ENCODE measurements at regions of chr14 and their contacts with region 1.

Region 1: DNA sequence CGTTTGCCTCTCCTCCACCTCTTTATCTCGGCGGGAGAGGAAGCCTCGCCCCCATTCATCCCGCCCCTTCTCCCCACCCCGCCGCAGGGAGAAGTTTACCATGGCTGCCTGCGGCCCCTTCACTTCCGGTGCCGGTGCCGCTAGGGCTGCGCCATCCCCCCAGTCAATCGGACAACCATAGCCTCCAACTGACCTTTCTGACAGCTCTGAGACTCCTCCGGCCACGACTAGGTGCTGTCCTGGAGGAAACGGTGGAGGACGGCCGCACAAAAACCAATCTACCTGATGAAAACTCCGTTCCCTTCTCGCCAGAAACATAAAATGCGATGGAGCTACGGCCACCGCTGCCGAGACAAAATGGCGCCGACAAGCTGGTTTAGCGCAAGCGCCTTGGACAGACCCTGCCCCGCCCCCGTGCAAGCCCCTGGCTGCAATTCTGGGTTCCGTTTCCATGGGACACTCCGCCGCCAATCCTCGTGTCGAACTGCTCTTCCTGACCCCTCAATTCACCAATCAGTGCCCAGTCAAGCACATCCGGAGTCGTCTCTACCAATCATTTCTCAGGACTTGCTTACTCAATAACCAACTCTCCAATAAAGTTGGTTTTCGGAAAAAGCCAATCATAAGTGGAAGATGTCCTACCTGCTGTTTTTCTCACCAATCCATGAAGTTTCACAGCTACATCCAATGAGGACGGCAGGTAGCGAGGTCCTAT is 436 bp upstream of the ARID4A start:
- DNase-seq: peak; percentile 98
- ATAC-seq: peak; percentile 92
- H3K4me3 Mint-ChIP-seq: no peak overlapping the region
- H3K27ac Mint-ChIP-seq: no peak overlapping the region
- H3K4me1 Mint-ChIP-seq: peaks cover 11% of the 10 kb centered on the region
- H3K27me3 Mint-ChIP-seq: no peaks in the 10 kb centered on the region
- CTCF ChIP-seq: no peak

Region 2: GRCh38 chr14:58244556-58245387 is 53.1 kb before region 1 on chr14 and contains the start of gene PSMA3:
- CTCF ChIA-PET with region 1: interaction called, 8 read pairs
- POLR2A ChIA-PET with region 1: interaction called, 21 read pairs
- DNase-seq: peak; percentile 97
- ATAC-seq: peak; percentile 94
- H3K4me3 Mint-ChIP-seq: peak within 1 kb of the TSS; percentile 92
- H3K27ac Mint-ChIP-seq: peak within 1 kb of the TSS; percentile 98
- H3K4me1 Mint-ChIP-seq: peaks cover 23% of the 10 kb centered on the region
- H3K27me3 Mint-ChIP-seq: no peaks in the 10 kb centered on the region
- CTCF ChIP-seq: no peak
- total RNA-seq, gene PSMA3: 260 to 286 TPM (median 270 TPM) in 3 replicates

Region 3: DNA sequence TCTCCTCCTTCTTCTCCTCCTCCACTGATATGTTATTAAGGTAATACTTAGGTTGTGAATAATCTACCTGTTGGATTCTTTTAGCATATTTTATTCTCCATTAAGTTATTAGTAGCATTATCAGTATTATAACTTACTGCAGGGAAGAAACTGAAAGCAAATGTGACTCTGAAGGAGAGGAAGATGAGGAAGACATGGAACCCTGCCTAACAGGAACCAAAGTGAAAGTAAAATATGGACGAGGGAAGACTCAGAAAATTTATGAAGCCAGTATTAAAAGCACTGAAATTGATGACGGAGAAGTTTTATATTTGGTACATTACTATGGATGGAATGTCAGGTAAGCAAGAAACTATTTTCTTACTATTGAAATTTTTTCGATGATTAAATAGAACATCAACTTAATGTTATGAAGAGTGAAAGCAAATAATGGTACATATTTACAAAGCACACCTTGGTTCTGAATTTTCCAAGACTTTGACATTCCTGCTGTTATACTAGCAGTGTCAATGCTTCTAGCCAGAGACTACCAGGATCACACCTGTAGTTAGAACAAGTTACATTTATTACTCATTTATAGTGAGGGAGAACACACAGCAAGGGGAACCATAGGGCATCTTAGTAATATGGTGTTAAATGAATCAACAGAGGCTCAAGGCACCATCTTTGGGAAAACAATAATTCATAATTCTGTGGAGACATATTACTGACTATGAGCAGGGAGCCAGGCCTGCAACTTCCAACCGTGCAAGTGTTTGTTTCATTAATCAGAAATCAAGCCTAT is 55.8 kb after region 1 on chr14:
- CTCF ChIA-PET with region 1: no interaction called
- POLR2A ChIA-PET with region 1: no interaction called
- DNase-seq: no peak
- ATAC-seq: no peak
- H3K4me3 Mint-ChIP-seq: no peak overlapping the region
- H3K27ac Mint-ChIP-seq: no peak overlapping the region
- H3K4me1 Mint-ChIP-seq: no peaks in the 10 kb centered on the region
- H3K27me3 Mint-ChIP-seq: no peaks in the 10 kb centered on the region
- CTCF ChIP-seq: no peak

Region 4: GRCh38 chr14:58395812-58396788 is 98.2 kb after region 1 on chr14 and contains the start of gene TOMM20L:
- CTCF ChIA-PET with region 1: interaction called, 12 read pairs
- POLR2A ChIA-PET with region 1: interaction called, 9 read pairs
- DNase-seq: peak; percentile 82
- ATAC-seq: peak; percentile 88
- H3K4me3 Mint-ChIP-seq: peak within 1 kb of the TSS; percentile 68
- H3K27ac Mint-ChIP-seq: peak within 1 kb of the TSS; percentile 81
- H3K4me1 Mint-ChIP-seq: peaks cover 31% of the 10 kb centered on the region
- H3K27me3 Mint-ChIP-seq: peaks cover 31% of the 10 kb centered on the region
- CTCF ChIP-seq: peak; percentile 91
- total RNA-seq, gene TOMM20L: not detected in 3 replicates

Region 5: GRCh38 chr14:58427281-58428117 is 129.6 kb after region 1 on chr14 and contains the starts of genes KIAA0586 and TIMM9:
- CTCF ChIA-PET with region 1: no interaction called
- POLR2A ChIA-PET with region 1: interaction called, 14 read pairs
- DNase-seq: peak; percentile 95
- ATAC-seq: peak; percentile 89
- H3K4me3 Mint-ChIP-seq: peak within 1 kb of the TSS; percentile 93
- H3K27ac Mint-ChIP-seq: peak within 1 kb of the TSS; percentile 95
- H3K4me1 Mint-ChIP-seq: peaks cover 16% of the 10 kb centered on the region
- H3K27me3 Mint-ChIP-seq: no peaks in the 10 kb centered on the region
- CTCF ChIP-seq: no peak
- total RNA-seq, gene KIAA0586: 20.5 to 23.5 TPM (median 22.2 TPM) in 3 replicates
- total RNA-seq, gene TIMM9: 47.3 to 55.4 TPM (median 51.1 TPM) in 3 replicates

Measured in WTC11 (cell line).